Motor neuron (in vitro differentiated cells): ENCODE measurements at regions of chr17 and their contacts with region 1.

Region 1: DNA sequence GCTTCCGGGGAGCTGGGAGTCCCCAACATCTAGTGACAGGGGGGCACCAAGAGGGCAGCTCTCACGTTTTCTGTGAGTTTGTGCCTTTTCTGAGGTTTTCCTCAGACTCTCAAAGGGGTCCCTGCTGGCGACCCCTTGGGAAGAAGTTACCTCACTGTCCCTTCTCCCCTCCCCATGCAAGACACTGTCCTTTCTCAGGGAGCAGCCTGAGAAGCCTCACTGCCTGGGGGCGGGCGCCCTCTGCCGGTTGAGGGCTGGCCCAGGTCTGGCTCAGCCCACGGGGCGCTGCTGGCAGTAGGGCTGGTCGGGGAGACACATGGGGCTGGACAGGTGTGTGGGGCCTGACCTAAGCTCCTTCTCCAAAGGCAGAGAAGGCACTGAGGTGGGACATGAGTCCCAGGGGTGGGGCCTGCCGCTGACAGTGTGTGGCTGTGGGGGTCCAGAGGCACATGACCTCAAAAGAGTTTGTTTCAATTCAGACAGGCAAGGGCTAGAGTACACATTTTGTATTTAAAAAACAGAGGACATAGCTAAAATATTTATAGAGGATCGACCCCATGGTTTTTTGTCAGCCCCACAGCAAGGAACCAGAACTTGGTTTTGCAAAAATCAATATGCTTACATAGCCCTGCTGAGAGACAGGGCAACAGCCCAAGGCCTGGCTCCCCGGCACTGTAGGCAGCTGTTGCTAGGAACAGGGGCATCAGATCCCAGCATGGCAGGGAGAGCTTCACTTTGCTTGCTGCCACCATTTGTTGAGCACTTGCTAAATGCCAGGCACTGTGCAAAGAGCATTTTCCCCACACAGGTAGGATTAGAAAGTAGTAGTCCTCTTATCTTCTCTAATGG is 18.5 kb upstream of the ALDH3A1 start:
- ATAC-seq: peak; percentile 87 to 96 (median 93)
- H3K4me3 ChIP-seq: no peak overlapping the region
- H3K27ac ChIP-seq: no peak overlapping the region
- H3K4me1 ChIP-seq: peaks cover 0 to 8% of the 10 kb centered on the region in 2 donors

Region 2: DNA sequence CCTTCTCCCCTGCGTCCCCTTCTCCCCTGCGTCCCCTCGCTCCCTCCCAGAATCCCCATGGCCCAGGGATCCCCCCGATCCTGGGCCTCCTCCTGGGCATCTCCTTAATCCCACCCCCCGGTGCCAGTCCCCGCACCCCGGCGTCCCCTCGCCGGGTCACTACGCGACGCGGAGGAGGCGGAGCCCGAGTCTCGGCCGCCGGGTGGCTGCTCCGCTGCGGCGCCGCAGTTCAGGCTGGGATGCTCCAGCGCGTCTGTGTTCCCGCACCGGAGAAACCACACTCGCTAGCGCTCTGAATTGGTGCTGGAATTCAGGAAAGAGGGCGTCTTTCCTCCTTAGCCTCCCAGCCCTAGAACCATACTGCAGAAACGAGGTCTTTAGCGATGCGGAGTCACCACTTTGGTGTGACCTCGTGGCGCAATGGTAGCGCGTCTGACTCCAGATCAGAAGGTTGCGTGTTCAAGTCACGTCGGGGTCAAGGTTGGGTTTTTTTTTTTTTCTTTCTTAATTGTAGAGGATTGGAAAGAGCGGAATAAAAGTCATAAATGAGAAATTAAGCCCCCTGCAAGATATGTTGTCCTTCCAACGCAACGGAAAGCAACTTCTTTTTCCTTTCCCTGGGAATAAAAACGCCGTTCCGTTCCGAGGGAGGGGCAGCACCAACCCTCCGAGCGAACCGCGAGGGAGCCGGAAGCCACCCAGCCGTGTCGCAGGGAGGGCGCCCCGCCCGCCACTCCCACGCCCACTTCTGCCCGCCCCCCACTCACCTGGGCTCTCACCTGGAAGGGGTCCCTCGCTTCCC is 258.7 kb before region 1 on chr17:
- in situ Hi-C with region 1: loop called (anchors 5 to 25 kb)
- ATAC-seq: peak; percentile 87 to 93 (median 92)
- H3K4me3 ChIP-seq: peak overlapping the region; percentile 51 to 70 (median 55)
- H3K27ac ChIP-seq: peak overlapping the region; percentile 87 to 88
- H3K4me1 ChIP-seq: no peaks in the 10 kb centered on the region

Region 3: GRCh38 chr17:19513897-19514488 is 252.7 kb before region 1 on chr17:
- in situ Hi-C with region 1: loop called (anchors 5 to 25 kb)
- ATAC-seq: peak; percentile 74 to 94 (median 82)
- H3K4me3 ChIP-seq: no peak overlapping the region
- H3K27ac ChIP-seq: no peak overlapping the region
- H3K4me1 ChIP-seq: no peaks in the 10 kb centered on the region